Mammary epithelial cell (primary cell): ENCODE measurements at regions of chr9 and their contacts with region 1.

Region 1: DNA sequence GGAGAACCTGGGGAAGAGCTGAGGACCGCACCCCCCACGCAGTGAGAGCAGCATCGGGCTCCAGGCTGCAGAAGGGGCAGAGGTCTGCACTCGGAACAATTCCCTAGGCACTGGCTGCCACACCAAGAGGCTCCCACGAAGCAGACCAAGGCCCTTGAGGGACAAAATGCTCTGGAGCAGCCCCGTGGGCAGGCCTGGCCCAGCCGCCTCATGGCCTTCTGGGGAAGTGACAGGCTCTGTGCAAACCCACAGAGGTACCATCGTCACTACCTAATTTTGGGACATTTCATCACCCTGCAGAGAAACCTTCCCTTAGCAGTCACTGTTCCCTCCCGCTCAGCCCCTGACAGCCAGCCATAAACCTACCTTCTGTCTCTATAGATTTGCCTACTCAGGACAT is 15.9 kb downstream of the FBXW5 start:
- DNase-seq: no peak
- H3K4me3 ChIP-seq: no peak overlapping the region
- H3K27ac ChIP-seq: no peak overlapping the region
- H3K4me1 ChIP-seq: no peaks in the 10 kb centered on the region
- H3K27me3 ChIP-seq: no peaks in the 10 kb centered on the region
- CTCF ChIP-seq: no peak

Region 2: GRCh38 chr9:136865735-136866103 is 62.9 kb before region 1 on chr9:
- CTCF ChIA-PET with region 1: no interaction called
- dilution Hi-C with region 1: loop called (anchors 5 kb)
- in situ Hi-C with region 1: no loop called
- intact Hi-C with region 1: no loop called
- DNase-seq: no peak
- H3K4me3 ChIP-seq: peak overlapping the region; percentile 73 to 96 (median 94)
- H3K27ac ChIP-seq: peak overlapping the region; percentile 35
- H3K4me1 ChIP-seq: peaks cover 4% of the 10 kb centered on the region
- H3K27me3 ChIP-seq: no peaks in the 10 kb centered on the region
- CTCF ChIP-seq: no peak